Astrocyte of the spinal cord (primary cell): ENCODE measurements at regions of chr7 and their contacts with region 1.

Region 1: DNA sequence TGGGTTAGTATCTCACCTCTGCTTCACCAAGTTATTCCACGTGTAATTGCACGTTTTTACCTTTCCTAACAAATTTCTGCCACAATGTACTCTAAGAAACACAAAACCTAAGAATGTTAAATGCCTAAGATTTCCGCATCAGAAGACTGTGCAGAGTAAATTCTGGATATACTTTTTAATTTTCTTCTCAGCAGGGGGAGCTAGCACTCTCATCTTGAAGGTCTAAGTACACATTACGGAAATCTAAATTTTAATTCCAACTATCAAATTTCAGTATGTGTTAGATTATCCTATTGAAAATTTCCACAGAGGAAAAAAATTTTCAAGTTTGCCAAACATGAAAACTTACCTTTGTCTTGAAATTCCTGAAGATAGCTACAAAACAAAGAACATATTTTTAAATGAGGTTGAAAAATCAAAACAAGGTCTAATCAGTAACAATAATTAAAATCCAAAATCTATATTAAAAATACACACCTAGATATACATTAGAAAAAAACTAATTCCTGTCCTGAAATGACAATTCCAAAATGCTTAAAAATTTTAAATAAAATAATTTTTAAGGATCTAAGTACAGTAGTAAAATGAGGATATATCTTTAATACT is 10.5 kb downstream of the SKAP2 start:
- DNase-seq: peak; percentile 80
- H3K4me3 ChIP-seq: no peak overlapping the region
- CTCF ChIP-seq: peak; percentile 53

Region 2: DNA sequence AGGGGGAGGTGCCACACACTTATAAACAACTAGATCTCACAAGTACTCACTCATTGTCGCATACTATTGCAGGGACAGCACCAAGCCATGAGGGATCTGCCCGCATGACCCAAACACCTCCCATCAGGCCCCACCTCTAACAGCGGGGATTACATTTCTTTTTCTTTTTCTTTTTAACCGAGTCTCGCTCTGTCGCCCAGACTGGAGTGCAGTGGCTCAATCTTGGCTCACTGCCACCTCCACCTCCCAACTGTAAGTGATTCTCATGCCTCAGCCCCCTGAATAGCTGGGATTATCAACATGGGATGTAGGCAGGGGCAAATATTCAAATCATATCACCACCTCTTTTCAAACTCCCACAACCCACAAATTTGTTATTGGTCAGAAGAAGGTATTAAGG is 66.2 kb before region 1 on chr7:
- in situ Hi-C with region 1: no loop called
- DNase-seq: no peak
- H3K4me3 ChIP-seq: no peak overlapping the region
- CTCF ChIP-seq: no peak

Region 3: DNA sequence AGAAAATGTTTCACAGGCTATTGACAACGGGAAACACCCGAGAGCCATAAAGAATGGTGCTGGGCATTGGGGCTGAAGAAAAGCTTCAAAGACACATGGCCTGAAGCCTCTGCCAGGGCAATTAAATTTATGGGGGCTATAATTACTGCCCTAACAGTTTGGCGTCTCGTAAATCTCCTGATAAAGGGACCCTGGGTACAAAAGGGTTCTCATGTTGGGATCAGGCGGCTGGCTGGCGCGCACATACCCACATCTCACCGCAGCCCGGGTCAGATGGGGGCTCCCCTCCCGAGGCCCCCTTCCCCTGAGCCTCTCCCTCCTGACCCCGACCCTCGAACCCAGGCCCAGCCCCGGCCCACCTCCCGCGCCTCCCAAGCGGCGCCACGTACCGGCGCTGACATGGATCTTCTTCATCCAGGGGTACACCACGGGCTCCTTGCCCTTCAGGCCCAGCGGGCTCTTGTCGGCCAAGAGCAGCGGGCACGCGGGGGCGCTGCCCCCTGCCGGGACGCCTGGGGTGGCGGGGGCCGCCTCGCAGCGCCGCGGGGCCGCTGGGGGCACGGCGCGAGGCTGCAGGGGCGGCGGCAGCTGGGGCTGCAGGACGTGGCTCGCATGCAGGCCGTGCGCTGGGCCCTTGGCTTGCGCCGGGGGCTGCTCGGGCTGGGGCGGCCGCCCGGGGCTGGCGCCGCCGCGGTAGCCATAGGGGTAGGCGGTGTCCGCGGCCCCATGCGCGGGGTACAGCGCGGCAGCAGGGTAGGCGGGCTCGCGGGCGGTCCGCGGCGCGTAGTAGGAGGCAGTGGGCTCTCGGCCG is 276.0 kb after region 1 on chr7:
- in situ Hi-C with region 1: loop called (anchors 10 kb)
- DNase-seq: no peak
- H3K4me3 ChIP-seq: peak overlapping the region; percentile 53
- CTCF ChIP-seq: no peak